Esophagus squamous epithelium (tissue), 5 donors: ENCODE measurements at regions of chr13 and their contacts with region 1.

Region 1: DNA sequence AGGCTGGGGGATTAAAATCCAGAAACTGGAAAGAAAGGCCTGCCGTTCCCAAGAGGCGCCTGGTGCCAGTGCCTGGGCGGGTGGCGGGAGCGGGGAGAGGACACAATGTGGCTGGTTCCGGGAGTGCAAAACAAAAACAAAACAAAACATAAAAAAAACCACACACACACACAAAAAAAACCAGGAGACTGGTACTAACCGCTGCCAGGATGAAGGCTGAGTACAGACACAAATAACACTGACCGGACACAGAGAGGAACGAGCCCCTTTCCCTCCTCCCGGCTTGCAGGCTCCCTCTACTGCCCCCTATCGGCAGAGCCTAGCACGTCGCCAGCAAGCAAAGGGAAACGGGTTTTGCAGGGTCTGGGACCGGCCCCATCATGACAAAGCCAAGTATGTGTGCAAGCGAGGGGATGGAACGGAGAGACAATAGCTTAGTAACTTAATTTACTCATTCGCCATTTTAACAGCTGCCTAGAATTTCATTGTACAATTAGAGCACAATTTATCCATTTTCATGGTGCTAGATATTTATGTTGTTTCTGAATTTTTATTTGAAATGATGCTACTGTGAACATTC is 17.9 kb upstream of the ZDHHC20 start:
- DNase-seq: no peak
- H3K4me3 ChIP-seq: peak overlapping the region; percentile 16 to 49 (median 45)
- H3K27ac ChIP-seq: peak overlapping the region in 3 of 4 donors; percentile 38 to 68 (median 63)
- H3K4me1 ChIP-seq: peaks cover 5 to 27% (median 8%) of the 10 kb centered on the region in 3 donors
- H3K27me3 ChIP-seq: no peaks in the 10 kb centered on the region
- CTCF ChIP-seq: peak; percentile 84 to 97 (median 95)
- POLR2A ChIP-seq: no peak

Region 2: DNA sequence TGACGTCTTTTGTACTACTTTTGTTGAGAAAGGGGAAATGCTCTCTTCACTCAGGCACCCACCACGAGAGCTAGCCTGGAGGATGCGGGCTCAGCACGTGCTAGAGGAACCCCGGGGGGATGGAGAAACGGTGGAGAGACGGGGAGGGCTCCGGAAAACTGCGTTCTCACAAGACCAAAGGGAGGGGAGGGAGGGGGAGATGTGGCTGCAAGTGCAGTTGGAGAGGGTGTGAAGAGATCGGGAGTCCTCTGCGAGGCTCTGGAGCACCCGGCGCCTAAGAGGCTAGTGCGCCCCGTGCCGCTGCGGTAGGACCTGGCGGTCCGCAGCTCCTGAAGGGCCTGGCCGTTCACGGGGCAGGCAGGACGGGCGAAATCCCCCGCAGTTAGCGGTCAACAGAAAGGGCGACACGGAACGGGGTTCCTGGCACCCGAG is 531.0 kb before region 1 on chr13:
- intact Hi-C with region 1: loop called (anchors 10 kb)
- DNase-seq: no peak
- H3K4me3 ChIP-seq: peak overlapping the region in 1 of 4 donors; percentile 52
- H3K27ac ChIP-seq: no peak overlapping the region
- H3K4me1 ChIP-seq: peaks cover 0 to 37% (median 10%) of the 10 kb centered on the region in 3 donors
- H3K27me3 ChIP-seq: peaks cover 0 to 6% (median 0%) of the 10 kb centered on the region in 4 donors
- CTCF ChIP-seq: no peak
- POLR2A ChIP-seq: no peak

Region 3: GRCh38 chr13:21115231-21115630 is 361.8 kb before region 1 on chr13:
- intact Hi-C with region 1: loop called (anchors 10 kb)
- DNase-seq: no peak
- H3K4me3 ChIP-seq: no peak overlapping the region
- H3K27ac ChIP-seq: no peak overlapping the region
- H3K4me1 ChIP-seq: no peaks in the 10 kb centered on the region
- H3K27me3 ChIP-seq: no peaks in the 10 kb centered on the region
- CTCF ChIP-seq: no peak
- POLR2A ChIP-seq: no peak

Region 4: DNA sequence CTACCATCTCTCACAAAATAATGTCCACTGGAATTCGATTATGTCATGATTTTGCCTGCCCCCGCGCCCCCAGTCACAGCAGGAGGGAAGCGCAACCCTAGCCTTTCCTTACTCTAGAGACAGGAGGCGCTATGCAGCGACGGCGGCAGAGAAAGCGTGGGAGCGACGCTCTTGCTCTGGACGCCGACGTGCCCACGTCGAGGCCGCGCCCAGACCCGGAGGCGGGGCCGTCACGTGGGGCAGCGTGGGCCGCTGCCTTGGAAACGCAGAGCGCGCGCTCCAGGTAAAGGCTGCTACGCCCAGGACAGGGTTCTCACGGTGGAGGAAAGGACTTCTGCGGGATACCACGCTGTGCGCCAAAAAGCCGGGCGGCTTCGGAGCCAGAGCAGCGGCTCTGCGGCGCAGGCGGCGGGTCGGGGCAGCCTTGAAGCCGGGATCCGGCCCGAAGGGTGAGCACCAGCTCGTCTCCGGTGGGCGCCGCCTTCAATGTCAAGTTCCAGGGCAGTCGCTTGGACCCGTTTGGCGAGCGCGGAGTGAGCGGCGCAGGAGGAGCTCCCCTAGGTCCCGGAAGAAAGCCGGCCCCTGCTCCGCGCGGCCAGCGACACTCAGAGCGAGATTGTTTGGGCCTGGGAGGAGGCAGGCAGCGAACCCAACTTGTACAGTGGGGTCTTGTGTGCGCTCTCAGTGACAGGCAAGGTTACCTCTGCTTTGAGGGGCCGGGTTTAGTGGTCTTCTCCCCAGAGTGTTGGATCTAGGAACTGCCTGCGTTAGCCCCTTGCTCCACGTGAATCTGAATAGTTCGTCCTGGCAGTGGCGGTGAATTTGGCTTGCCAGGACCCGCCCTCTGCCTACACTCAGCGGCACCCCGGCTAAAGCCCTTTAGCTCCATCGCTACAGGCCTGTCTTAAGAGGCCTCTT is 178.8 kb before region 1 on chr13:
- intact Hi-C with region 1: loop called (anchors 5 kb)
- DNase-seq: peak; percentile 20
- H3K4me3 ChIP-seq: peak overlapping the region; percentile 65 to 99 (median 82)
- H3K27ac ChIP-seq: peak overlapping the region; percentile 75 to 90 (median 86)
- H3K4me1 ChIP-seq: peaks cover 0 to 33% (median 9%) of the 10 kb centered on the region in 3 donors
- H3K27me3 ChIP-seq: no peaks in the 10 kb centered on the region
- CTCF ChIP-seq: peak; percentile 90 to 96 (median 92)
- POLR2A ChIP-seq: peak in 2 of 4 donors; percentile 27 to 51